Dorsolateral prefrontal cortex (tissue), 120 donors: ENCODE measurements at regions of chr3 and their contacts with region 1.

Region 1: DNA sequence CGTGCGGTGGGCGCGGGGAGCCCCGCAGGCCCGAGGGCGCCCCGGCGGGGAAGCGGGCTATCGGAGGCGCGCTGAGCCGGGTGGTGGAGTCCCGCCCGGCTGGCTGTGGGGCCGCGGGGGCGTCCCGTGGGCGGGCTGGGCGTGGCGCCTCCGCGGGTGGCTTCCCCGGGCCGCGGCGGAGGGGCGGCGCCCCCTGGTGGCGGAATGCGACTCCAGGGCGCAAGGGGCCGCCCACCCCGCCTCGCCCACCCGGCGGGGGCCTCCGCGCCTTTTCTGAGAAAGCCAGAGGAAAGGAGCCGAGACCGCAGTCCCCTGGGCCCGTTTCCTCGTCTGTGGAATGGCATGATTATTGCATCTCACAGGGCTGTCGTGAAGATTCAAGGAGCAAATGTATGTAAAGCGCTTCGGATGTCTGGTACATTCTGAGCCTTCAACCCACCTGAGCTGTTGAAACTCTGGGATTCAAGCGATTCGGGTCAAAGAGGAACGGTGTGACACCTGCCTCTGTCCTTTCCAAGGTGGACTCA is 31.9 kb upstream of the RAB6B start:
- DNase-seq: peak in 4 of 10 donors; percentile 39 to 76 (median 58)
- H3K4me3 ChIP-seq: peak overlapping the region; percentile 36 to 77 (median 64)
- H3K27ac ChIP-seq: peak overlapping the region in 10 of 59 donors; percentile 1 to 75 (median 28)
- H3K27me3 ChIP-seq: no peaks in the 10 kb centered on the region
- CTCF ChIP-seq: peak in 55 of 56 donors; percentile 46 to 98 (median 75)

Region 2: GRCh38 chr3:134212906-134213665 is 285.5 kb after region 1 on chr3:
- intact Hi-C with region 1: loop called in 1 of 2 experiments (anchors 5 kb)
- DNase-seq: peak; percentile 72 to 93 (median 85)
- H3K4me3 ChIP-seq: no peak overlapping the region
- H3K27ac ChIP-seq: peak overlapping the region in 9 of 59 donors; percentile 7 to 48 (median 17)
- H3K27me3 ChIP-seq: no peaks in the 10 kb centered on the region
- CTCF ChIP-seq: peak; percentile 86 to 100 (median 97)

Region 3: DNA sequence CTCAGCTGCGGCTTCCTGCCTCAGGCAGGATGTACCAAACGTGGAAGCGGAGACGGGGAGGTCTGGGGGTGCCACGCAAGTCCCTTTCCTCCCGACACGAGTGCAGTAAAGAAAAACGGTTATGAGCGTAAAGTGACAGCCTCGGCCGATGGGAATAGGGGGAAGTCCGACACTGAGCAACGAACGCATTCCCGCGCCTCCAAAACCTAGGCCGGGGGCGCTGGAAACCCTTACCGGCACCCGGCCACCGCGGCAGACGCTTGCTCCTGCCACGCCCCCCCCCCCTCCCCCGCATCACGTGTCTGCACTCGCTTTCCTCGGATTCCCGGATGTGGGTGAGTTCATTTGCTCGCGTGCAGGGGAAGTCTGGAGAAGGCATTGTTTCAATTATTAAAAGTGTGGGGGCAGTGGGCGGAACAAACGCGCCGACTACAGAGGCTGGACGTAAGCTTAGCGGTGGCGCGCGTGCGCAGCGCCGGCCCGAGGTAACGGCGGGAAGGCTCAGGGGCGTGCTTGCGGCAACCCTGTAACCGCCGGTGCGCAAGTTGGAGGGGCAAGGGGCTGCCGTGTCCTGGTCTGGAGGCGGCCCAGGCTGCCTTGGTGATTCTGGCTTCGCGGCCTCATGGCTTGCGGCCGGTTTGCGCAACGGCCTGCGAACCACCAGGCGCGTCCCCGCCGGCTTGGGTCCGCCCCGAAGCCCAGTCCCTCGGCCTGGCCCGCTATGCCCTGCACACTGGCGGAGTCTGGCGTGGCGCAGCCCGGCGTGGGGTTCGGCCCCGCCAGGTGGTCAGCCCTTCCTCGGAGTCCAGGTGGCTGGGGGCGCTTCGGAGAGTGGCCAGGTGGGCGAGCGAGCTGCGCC is 558.3 kb after region 1 on chr3 and contains the starts of genes ANAPC13 and CEP63:
- intact Hi-C with region 1: loop called in 1 of 2 experiments (anchors 5 kb)
- DNase-seq: peak; percentile 78 to 95 (median 90)
- H3K4me3 ChIP-seq: peak within 1 kb of the TSS; percentile 68 to 100 (median 93)
- H3K27ac ChIP-seq: peak within 1 kb of the TSS; percentile 85 to 98 (median 95)
- H3K27me3 ChIP-seq: no peaks in the 10 kb centered on the region
- CTCF ChIP-seq: peak in 28 of 56 donors; percentile 5 to 53 (median 20)
- total RNA-seq, gene ANAPC13: 18.9 to 65.9 (median 47.8) TPM
- total RNA-seq, gene CEP63: 27.2 to 57.8 (median 39.4) TPM